ENCODE measurements at regions of chr10 and their contacts with region 1.

Region 1: GRCh38 chr10:21495752-21496342 is 29.6 kb downstream of the SKIDA1 start:
- DNase-seq: peak; percentile 82
- H3K4me3 Mint-ChIP-seq: peak overlapping the region; percentile 84
- H3K27ac Mint-ChIP-seq: no peak overlapping the region
- H3K4me1 Mint-ChIP-seq: peaks cover 17% of the 10 kb centered on the region
- H3K27me3 Mint-ChIP-seq: peaks cover 68% of the 10 kb centered on the region

Region 2: DNA sequence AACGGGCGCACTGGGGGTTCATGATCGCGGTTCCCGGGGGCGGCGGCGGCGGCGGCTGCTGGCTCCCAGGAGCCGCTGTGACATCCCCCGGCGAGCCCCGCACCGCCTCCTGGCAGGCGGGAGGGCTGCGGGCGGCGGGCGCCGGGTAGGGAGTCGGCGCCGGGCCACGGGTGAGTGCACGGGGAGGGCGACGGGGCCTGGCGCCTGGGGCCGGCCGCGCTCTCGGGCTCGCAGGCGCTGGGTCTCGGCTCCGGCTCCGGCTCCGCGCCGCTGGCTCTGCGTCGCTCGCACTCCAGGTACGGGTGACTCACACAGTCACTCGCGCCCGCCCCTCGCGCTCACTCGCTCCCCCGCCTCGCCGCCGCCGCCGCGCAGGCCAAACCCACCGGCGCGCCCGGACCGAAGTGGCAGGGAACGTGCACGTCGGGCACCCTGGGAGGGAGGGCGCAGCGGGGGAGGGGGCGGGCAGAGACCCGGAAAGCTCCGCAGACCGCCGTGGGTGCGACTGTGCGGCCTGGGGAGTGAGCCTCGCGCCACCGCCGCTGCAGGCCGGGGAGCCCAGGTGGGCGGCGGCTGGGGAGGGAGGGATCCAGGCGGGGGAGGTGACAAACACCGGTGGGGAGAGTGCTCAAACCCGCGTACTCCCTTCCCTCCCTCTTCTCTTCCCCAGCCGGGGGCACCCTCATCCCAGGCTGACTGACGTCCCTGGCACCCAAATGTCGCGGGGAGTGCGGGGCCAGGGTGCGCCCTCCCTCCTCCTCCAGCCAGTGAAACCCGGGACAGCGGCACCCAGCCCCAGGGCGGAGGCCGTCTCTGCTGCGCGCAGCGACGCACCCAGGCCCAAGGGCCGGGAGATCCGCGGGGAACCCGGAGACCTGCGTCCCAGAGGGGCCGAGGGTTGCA is 321.8 kb before region 1 on chr10:
- intact Hi-C with region 1: loop called (anchors 10 kb)
- DNase-seq: no peak
- H3K4me3 Mint-ChIP-seq: peak overlapping the region; percentile 42
- H3K27ac Mint-ChIP-seq: no peak overlapping the region
- H3K4me1 Mint-ChIP-seq: peaks cover 3% of the 10 kb centered on the region
- H3K27me3 Mint-ChIP-seq: peaks cover 48% of the 10 kb centered on the region

Region 3: DNA sequence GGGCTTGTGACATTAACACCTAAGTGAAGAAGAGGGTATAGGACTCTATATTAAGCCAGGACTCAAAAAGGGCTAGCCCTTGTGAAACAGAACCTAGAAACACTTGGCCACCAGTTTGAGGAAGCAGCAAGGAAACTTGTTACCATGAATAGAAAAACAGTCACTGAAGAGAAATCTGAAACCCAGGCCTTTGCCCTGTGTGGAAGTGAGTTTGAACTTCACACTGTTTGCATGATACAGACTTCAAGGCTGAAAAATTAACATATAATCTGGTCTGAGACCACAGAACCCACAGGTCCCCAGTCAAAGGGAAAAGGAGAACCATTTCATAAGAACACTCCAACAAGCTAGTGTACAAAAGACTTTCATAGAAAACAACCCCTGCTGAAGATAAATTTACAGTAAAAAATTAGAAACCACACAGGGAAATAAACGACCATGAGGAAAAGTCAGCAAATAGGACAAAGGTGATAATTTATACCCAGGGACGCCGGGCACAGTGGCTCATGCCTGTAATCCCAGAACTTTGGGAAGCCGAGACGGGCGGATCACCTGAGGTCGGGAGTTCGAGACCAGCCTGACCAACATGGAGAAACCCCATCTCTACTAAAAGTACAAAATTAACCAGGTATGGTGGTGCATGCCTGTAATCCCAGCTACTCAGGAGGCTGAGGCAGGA is 46.4 kb before region 1 on chr10:
- intact Hi-C with region 1: no loop called
- DNase-seq: no peak
- H3K4me3 Mint-ChIP-seq: no peak overlapping the region
- H3K27ac Mint-ChIP-seq: no peak overlapping the region
- H3K4me1 Mint-ChIP-seq: no peaks in the 10 kb centered on the region
- H3K27me3 Mint-ChIP-seq: peaks cover 2% of the 10 kb centered on the region

Region 4: DNA sequence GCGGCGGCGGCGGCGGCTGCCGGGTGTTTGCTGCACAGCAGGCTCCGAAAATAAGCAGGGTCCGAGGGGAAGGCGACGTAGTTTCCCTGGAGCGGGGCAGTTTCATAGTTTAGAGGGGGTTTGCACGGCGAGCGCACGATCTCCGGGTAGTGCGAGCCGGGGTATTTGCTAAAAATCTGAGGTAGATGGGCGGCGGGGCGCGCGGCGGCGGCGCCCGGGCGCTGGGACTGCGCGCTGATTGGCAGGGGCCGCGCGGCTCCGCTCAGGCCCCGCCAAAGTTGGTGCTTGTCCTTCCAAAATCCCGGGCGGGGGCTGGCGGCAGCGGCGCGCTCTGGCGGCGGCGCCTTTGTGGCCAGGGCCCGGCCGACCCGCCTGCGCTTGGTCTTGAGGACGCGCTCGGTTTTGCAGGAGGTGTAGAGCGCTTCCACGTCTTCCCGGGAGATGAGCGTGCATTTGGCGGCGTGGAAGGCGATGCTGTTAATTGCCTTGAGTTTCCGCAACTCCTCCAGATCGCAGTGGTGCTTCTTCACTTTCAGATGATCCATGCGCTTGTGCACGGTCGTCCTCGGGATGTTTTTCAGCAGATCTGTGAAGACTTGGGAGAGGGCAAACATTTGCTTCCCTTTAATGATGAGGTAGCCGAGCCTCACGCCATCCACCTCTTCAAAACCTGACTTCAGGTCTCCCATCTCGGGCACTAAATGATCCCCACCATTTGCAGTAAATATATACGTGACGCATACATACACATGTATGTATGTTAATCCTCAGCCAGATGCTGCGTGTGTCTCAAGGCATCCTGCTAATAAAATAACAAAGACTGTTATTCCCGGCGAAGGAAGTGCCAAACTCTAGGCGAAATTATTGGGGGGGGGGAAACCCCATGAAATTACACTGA is 21.5 kb after region 1 on chr10:
- intact Hi-C with region 1: loop called (anchors 1 kb)
- DNase-seq: no peak
- H3K4me3 Mint-ChIP-seq: peak overlapping the region; percentile 65
- H3K27ac Mint-ChIP-seq: no peak overlapping the region
- H3K4me1 Mint-ChIP-seq: peaks cover 39% of the 10 kb centered on the region
- H3K27me3 Mint-ChIP-seq: peaks cover 64% of the 10 kb centered on the region

Region 5: DNA sequence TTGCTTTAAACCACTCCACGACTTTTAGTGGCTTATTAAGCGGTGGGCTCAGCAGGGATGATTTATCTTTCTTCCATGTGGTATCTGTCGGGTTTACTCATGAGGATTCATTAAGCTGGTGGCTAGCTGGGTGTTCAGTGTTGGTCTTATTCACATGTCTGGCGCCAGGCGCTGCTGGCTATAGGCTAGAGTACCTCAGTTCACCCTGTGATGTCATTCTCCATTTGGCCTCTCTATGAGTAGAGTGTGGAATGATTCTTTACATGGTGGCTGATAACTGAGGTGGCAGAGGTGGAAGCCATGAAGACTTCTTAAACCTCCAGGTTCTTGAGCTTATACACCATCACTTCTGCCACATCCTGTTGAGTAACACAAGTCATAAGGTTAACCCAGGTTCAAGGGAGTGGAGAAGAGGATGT is 153.6 kb after region 1 on chr10:
- intact Hi-C with region 1: no loop called
- DNase-seq: no peak
- H3K4me3 Mint-ChIP-seq: no peak overlapping the region
- H3K27ac Mint-ChIP-seq: peak overlapping the region; percentile 85
- H3K4me1 Mint-ChIP-seq: peaks cover 13% of the 10 kb centered on the region
- H3K27me3 Mint-ChIP-seq: no peaks in the 10 kb centered on the region

Region 6: GRCh38 chr10:21732067-21732772 is 236.4 kb after region 1 on chr10:
- intact Hi-C with region 1: loop called (anchors 1 kb)
- DNase-seq: peak; percentile 34
- H3K4me3 Mint-ChIP-seq: no peak overlapping the region
- H3K27ac Mint-ChIP-seq: no peak overlapping the region
- H3K4me1 Mint-ChIP-seq: peaks cover 23% of the 10 kb centered on the region
- H3K27me3 Mint-ChIP-seq: no peaks in the 10 kb centered on the region

Region 7: GRCh38 chr10:22228943-22229801 is 733.3 kb after region 1 on chr10:
- intact Hi-C with region 1: loop called (anchors 10 kb)
- DNase-seq: peak; percentile 82
- H3K4me3 Mint-ChIP-seq: peak overlapping the region; percentile 88
- H3K27ac Mint-ChIP-seq: peak overlapping the region; percentile 82
- H3K4me1 Mint-ChIP-seq: peaks cover 18% of the 10 kb centered on the region
- H3K27me3 Mint-ChIP-seq: peaks cover 8% of the 10 kb centered on the region